Activated CD4-positive, alpha-beta memory T cell treated with anti-CD3 and anti-CD28 coated beads for 36 hours (primary cell): ENCODE measurements at regions of chr12 and their contacts with region 1.

Region 1: GRCh38 chr12:49945394-49946080 is 5.0 kb upstream of the AQP2 start:
- DNase-seq: peak; percentile 93
- H3K4me3 Mint-ChIP-seq: peak overlapping the region; percentile 70
- H3K27ac Mint-ChIP-seq: peak overlapping the region; percentile 81
- H3K4me1 Mint-ChIP-seq: peaks cover 33% of the 10 kb centered on the region
- H3K27me3 Mint-ChIP-seq: no peaks in the 10 kb centered on the region

Region 2: DNA sequence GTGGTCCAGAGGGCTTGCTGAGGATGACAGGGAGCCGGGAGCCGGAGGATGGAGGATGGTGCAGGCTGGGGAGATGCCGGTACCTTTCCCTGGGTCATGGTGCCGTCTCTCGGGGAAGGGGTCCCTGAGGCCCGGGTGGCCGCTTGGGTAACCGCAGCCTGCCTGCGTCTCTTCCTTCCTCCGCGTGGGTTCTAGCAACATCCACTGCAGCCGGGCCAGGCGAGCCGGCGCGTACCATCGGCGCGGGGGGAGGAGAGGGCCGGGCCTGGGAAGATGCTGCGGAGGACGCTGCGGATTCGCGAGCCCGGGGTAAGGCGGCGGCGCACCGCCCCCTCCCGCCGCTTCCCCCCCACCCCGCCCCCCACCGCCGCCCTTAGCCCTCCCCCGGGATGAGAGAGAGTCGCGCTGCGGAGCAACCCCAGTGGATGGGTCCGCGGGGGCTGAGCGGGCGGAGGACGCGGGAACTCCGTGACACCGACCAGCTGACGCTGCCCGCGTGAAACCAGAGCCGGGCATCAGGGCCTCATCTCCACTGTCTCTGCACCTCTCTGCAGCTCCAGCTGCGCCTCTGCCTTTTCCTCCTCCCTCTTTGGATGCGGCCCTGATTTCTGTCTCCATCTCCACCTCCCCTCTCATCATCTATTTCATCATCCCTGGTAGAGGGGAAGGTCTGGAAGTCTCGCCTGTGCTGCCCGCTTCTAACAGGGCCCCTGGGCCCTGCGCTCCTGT is 41.7 kb before region 1 on chr12 and contains the start of gene FAIM2:
- CTCF ChIA-PET with region 1: interaction called, 12 read pairs
- POLR2A ChIA-PET with region 1: no interaction called
- intact Hi-C with region 1: loop called (anchors 5 kb)
- DNase-seq: peak; percentile 68
- H3K4me3 Mint-ChIP-seq: peak within 1 kb of the TSS; percentile 71
- H3K27ac Mint-ChIP-seq: no peak within 1 kb of the TSS
- H3K4me1 Mint-ChIP-seq: peaks cover 15% of the 10 kb centered on the region
- H3K27me3 Mint-ChIP-seq: no peaks in the 10 kb centered on the region
- total RNA-seq, gene FAIM2: 1.7 to 2.1 TPM

Region 3: DNA sequence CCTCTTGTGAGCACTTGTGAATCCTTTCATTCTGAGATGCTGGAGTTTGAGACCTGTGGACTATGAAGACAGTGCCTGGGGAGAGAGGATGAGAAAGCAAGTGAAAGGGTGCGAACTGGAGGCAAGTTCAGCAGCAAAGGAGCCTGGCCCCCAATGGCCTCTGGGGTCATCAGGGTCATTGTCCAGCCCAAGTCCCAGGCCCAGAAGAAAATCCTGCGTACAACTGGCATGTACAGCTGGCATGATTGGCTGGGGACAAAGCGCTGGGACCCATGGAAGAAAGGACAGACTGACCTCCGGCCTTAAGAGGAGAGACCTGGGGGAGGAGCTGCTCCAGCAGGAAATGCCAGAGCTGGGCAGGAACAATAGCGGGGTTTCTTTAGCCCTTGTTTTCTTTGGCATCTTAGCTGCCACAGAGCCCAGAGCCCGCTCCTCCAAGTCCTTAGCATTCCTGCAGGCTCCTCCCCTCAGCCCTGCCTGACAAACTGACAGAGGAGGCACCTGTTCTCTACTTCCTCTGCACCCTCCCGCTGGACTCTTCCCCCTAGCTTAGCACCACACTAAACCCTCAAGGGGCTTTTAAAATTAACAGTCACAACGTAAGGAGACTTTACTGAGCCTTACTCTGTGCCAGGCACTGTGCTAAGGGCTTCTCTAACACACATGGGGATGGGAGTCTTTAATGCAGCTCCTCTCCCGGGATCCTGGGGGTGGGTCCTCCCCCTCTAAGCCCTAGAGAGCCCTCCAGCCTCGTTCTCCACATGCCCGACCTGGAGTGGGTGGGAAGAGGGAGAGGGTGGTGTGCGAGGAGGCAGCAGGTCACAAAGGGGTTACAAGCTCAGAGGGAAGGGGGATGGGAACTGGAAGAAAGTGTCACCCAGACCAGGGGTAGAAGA is 14.3 kb after region 1 on chr12:
- CTCF ChIA-PET with region 1: interaction called, 95 read pairs
- POLR2A ChIA-PET with region 1: no interaction called
- intact Hi-C with region 1: loop called (anchors 1 kb)
- DNase-seq: no peak
- H3K4me3 Mint-ChIP-seq: no peak overlapping the region
- H3K27ac Mint-ChIP-seq: no peak overlapping the region
- H3K4me1 Mint-ChIP-seq: peaks cover 8% of the 10 kb centered on the region
- H3K27me3 Mint-ChIP-seq: peaks cover 68% of the 10 kb centered on the region

Region 4: GRCh38 chr12:50055831-50056638 is 110.5 kb after region 1 on chr12:
- CTCF ChIA-PET with region 1: interaction called, 28 read pairs
- POLR2A ChIA-PET with region 1: no interaction called
- intact Hi-C with region 1: no loop called
- DNase-seq: peak; percentile 71
- H3K4me3 Mint-ChIP-seq: peak overlapping the region; percentile 31
- H3K27ac Mint-ChIP-seq: no peak overlapping the region
- H3K4me1 Mint-ChIP-seq: peaks cover 24% of the 10 kb centered on the region
- H3K27me3 Mint-ChIP-seq: peaks cover 48% of the 10 kb centered on the region

Region 5: DNA sequence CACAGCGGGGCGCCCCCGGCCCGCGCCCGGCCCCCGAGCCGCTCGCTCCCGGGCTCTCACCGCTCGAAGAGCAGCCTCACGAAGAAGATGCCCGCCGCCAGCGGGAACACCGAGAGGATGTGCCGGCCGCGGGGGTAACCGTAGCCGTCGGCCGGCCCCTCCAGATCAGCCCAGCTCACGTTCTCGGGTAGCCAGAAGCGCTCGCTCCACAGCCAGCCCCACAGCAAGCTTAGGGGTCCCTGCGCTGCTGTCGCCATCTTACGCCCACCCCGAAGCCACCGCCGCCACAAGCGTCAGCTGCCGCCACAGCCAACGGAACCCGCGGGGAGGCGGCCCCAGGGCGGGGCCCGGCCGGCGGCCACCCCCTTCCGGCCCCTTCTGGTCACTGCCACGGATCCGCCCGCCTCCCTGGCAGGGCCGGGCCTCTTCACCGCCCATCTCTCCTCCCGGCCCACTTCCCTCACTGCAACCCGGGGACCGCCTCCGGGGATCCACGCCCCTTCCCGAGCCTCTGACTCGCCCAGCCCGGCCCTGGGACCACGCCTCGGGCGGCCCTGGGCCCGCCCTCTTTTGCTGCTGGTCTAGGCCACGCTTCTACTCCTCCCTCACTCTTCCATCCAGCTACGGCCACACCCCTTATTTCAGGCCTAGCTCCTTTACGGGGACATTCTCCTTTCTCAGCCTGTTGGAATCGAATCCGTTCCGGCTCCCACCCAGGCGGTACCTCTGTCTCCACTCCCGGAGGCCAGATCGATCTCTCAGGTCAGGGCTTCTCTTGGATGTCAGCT is 221.7 kb after region 1 on chr12 and contains the start of gene CERS5:
- CTCF ChIA-PET with region 1: no interaction called
- POLR2A ChIA-PET with region 1: no interaction called
- intact Hi-C with region 1: no loop called
- DNase-seq: peak; percentile 99
- H3K4me3 Mint-ChIP-seq: peak within 1 kb of the TSS; percentile 84
- H3K27ac Mint-ChIP-seq: peak within 1 kb of the TSS; percentile 94
- H3K4me1 Mint-ChIP-seq: peaks cover 28% of the 10 kb centered on the region
- H3K27me3 Mint-ChIP-seq: no peaks in the 10 kb centered on the region
- total RNA-seq, gene CERS5: 59.5 to 63.0 TPM